Activated CD4-positive, alpha-beta memory T cell treated with anti-CD3 and anti-CD28 coated beads for 36 hours (primary cell): ENCODE measurements at regions of chr1 and their contacts with region 1.

Region 1: GRCh38 chr1:92367496-92367895 is 68.6 kb downstream of the RPAP2 start:
- DNase-seq: no peak
- H3K4me3 Mint-ChIP-seq: no peak overlapping the region
- H3K27ac Mint-ChIP-seq: no peak overlapping the region
- H3K4me1 Mint-ChIP-seq: peaks cover 38% of the 10 kb centered on the region
- H3K27me3 Mint-ChIP-seq: no peaks in the 10 kb centered on the region

Region 2: GRCh38 chr1:92310185-92310597 is 57.3 kb before region 1 on chr1:
- CTCF ChIA-PET with region 1: interaction called, 8 read pairs
- POLR2A ChIA-PET with region 1: no interaction called
- intact Hi-C with region 1: loop called (anchors 1 kb)
- DNase-seq: no peak
- H3K4me3 Mint-ChIP-seq: no peak overlapping the region
- H3K27ac Mint-ChIP-seq: no peak overlapping the region
- H3K4me1 Mint-ChIP-seq: peaks cover 39% of the 10 kb centered on the region
- H3K27me3 Mint-ChIP-seq: no peaks in the 10 kb centered on the region

Region 3: DNA sequence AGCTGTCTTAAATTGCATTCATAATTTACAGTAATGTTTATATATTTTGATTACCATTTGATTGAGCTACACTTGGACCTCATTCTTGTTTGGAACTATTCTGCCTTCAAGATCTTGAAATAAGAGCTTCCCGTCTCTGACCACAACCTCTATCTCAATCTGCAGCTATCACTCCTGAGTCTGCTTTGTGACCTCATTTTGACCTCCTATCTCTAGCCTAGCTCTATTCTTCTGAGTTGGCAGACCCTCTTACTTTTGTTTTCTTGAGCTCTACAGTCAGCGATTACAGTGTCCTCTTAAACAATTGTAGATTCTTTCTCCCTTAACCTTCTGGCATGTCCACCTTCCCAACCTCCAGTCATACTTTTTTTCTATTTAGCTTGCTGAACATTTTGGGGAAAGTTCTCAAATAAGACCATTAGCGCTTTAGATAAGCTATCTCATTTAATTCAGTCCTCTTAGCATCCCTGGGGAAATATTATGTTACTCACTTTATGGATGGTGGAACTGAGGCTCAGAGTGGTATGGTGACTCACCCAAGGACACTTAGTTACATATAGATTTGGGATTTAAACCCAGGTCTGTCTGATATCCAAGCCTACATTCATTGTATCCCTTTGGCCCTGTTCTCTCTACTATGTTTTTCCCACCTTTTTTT is 49.5 kb before region 1 on chr1:
- CTCF ChIA-PET with region 1: interaction called, 3 read pairs
- POLR2A ChIA-PET with region 1: interaction called, 3 read pairs
- intact Hi-C with region 1: loop called (anchors 2 kb)
- DNase-seq: no peak
- H3K4me3 Mint-ChIP-seq: peak overlapping the region; percentile 3
- H3K27ac Mint-ChIP-seq: peak overlapping the region; percentile 63
- H3K4me1 Mint-ChIP-seq: peaks cover 59% of the 10 kb centered on the region
- H3K27me3 Mint-ChIP-seq: no peaks in the 10 kb centered on the region

Region 4: DNA sequence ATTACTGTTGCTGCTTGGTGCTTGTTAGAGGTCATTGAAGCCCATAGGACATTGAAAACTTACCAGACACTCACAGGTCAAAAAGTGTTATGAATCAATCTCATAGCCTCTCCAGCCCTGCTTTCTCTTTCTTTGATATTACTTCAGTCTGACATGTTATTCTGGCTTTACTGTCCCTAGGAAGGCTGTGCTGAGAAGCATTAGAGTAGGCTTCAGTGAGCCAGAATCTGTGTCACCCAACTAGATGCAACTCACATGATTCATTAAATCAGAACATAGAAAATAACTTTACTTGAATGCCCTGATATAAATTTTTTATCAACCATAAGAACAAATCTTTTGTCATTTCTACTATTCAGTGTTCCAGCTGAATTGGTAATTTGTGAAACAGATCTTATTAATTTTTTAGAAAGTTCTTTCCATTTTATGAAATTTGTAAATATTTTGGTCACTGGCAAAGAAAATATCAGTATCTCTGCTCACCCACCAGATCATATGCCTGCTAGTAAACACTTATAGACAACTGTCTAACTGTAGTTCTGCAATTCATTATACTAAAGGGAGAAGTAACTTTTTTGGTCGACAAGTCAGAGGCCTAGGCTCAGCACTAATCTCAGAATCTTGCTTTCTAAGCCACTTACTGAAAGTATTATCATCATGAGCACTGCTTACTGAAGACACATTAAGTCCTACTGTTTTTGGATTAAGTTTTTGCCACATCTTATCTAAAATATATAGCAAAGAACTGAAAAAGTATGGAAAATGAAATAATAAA is 20.4 kb before region 1 on chr1:
- CTCF ChIA-PET with region 1: no interaction called
- POLR2A ChIA-PET with region 1: no interaction called
- intact Hi-C with region 1: no loop called
- DNase-seq: no peak
- H3K4me3 Mint-ChIP-seq: no peak overlapping the region
- H3K27ac Mint-ChIP-seq: no peak overlapping the region
- H3K4me1 Mint-ChIP-seq: peaks cover 5% of the 10 kb centered on the region
- H3K27me3 Mint-ChIP-seq: no peaks in the 10 kb centered on the region

Region 5: GRCh38 chr1:92411511-92411910 is 44.0 kb after region 1 on chr1:
- CTCF ChIA-PET with region 1: no interaction called
- POLR2A ChIA-PET with region 1: no interaction called
- intact Hi-C with region 1: loop called (anchors 5 kb)
- DNase-seq: no peak
- H3K4me3 Mint-ChIP-seq: no peak overlapping the region
- H3K27ac Mint-ChIP-seq: no peak overlapping the region
- H3K4me1 Mint-ChIP-seq: peaks cover 30% of the 10 kb centered on the region
- H3K27me3 Mint-ChIP-seq: no peaks in the 10 kb centered on the region

Region 6: DNA sequence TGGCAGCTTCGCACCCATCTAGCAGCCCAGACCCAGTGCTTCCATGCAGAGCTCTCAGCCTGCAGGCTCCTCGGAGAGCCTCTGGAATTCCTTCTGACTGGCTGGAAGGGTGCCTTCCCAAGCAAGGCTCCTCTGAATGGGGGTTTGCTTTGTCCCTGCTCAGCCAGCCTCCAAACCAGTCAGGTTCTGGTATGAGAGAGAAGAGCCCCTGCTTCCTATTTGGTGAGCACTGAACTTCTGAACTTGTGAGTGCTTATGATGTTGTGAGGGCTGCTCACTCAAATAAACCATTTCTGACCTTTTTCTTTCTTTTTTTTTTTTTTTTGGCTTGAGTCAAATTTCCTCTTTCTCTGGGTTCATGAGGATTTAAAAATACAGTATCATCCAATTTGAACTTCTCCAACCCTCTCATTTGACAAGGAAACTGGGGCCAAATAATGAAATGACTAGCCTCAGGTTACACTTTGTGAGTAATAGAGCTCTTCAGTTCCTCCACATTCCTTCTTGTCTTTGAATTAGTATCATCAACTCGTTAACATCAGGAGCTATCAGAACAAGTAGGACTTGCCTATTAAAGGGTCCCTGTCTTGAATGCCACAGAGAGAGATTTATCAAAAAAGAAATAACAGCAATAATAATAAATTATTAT is 79.7 kb after region 1 on chr1:
- CTCF ChIA-PET with region 1: no interaction called
- POLR2A ChIA-PET with region 1: no interaction called
- intact Hi-C with region 1: loop called (anchors 5 kb)
- DNase-seq: no peak
- H3K4me3 Mint-ChIP-seq: no peak overlapping the region
- H3K27ac Mint-ChIP-seq: no peak overlapping the region
- H3K4me1 Mint-ChIP-seq: peaks cover 9% of the 10 kb centered on the region
- H3K27me3 Mint-ChIP-seq: no peaks in the 10 kb centered on the region

Region 7: DNA sequence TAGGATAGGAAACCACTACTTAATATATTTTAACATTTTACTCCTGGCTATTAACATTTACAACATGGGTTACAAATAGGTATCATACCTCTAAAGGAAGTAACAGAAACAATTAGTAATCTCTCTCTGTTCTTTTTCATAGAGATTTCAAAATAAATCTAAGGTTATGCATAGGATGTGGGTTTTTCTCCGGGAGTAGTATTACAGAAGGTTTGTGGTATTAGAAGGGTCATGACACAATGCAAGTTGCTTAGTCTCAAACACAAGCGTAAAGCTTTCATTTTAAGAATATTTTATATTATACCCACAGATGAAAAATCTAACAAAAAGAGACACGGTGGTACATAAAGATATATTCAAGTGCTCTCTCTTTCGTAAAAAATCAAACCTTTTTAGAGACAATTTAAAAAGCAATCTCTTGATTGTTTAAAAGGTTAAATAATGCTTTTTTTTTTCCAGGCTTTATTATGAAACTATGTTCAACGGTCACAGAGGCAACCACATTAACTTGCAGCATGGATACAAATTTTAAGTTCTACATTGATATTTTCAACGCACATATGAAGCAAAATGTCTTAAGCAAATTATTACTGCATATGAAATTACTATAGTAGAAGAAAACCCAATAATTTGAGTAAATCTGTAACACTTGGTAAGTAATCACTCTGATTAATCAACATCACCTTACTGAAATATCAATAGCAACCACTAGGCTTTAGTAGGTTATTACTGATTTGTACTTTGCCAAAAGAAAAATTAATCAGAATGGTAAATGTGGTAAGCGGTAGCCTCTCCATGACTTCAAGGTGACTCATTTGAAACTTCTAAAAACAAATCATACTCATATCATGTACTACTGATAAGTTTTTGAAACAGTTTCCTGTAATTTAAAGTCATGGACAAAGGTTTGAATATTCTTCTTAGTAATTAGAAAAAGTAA is 216.6 kb after region 1 on chr1:
- CTCF ChIA-PET with region 1: no interaction called
- POLR2A ChIA-PET with region 1: no interaction called
- intact Hi-C with region 1: loop called (anchors 5 kb)
- DNase-seq: no peak
- H3K4me3 Mint-ChIP-seq: peak overlapping the region; percentile 65
- H3K27ac Mint-ChIP-seq: peak overlapping the region; percentile 92
- H3K4me1 Mint-ChIP-seq: peaks cover 64% of the 10 kb centered on the region
- H3K27me3 Mint-ChIP-seq: no peaks in the 10 kb centered on the region